Left colon (tissue), 2 donors: ENCODE measurements at regions of chr17 and their contacts with region 1.

Region 1: DNA sequence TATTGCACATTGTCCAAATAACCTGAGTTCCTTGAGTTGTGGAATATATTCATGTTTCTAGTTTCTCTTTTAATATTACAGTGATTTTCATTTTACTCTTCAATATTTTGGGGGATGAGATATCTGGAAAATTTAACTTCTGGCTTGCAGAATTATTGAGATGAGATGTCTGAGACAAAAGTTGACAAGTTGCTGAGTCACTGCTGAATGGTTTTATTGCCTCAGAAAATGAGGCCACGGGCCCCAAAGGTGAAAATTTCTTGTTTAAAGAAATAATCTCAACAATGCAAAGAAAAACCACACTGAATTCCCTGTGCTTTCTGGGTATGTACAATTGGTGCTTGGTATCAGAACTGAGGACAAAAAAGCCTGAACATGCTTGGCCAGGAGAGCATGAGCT is 129.2 kb upstream of the TOM1L1 start:
- DNase-seq: no peak
- ATAC-seq: no peak

Region 2: DNA sequence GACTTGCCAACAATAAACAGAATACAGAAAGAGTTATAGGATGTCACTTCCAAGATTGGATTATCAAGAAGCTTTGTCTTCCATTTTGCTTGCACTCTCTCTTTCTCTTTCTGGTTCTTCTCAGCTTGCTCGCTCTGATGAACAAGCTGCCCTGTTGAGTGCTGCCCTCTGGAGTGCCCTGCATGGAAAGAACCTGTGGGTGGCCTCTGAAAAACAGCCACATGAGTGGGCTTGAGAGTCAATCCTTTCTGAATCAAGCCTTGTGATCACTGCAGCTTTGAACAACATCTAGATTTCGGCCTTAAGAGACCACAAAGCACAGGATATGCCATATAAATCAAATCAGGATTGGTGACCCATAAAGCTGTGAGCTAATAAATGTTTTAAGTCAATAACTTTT is 763.6 kb before region 1 on chr17:
- intact Hi-C with region 1: no loop called
- DNase-seq: no peak
- ATAC-seq: no peak

Region 3: GRCh38 chr17:54836723-54837462 is 65.5 kb after region 1 on chr17:
- intact Hi-C with region 1: loop called in 1 of 2 experiments (anchors 10 kb)
- DNase-seq: no peak
- ATAC-seq: no peak